Naive thymus-derived CD4-positive, alpha-beta T cell (primary cell): ENCODE measurements at regions of chr22 and their contacts with region 1.

Region 1: DNA sequence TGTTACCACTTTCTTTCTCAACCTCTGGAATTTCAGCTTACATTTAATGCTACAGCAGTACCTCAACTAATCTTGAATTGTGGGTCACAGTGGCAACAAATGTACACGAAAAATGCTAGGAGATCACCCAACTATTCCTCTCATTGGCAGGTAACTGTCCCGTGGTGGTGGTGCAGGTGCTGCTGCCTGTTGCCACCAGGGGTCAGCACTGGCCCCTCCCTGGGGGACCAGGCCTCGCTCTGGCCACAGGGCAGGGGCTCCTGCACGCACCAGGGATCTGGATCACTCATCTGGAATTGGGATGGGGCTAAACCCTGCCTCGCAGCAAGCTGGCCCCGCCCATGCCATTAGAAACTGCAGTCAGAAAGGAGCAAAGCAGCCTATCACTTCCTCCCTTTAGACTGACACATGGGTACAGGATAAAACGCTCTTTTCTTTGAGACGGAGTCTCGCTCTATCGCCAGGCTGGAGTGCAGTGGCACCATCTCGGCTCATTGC is 6.9 kb upstream of the POLDIP3 start:
- DNase-seq: peak; percentile 19 to 63 (median 41)
- ATAC-seq: peak; percentile 86
- H3K4me3 ChIP-seq: no peak overlapping the region
- H3K4me3 Mint-ChIP-seq: no peak overlapping the region
- H3K27ac ChIP-seq: no peak overlapping the region
- H3K27ac Mint-ChIP-seq: peak overlapping the region in 6 of 9 donors; percentile 18 to 70 (median 43)
- H3K4me1 ChIP-seq: no peaks in the 10 kb centered on the region
- H3K4me1 Mint-ChIP-seq: peaks cover 0 to 11% (median 6%) of the 10 kb centered on the region in 7 donors
- H3K27me3 ChIP-seq: no peaks in the 10 kb centered on the region
- H3K27me3 Mint-ChIP-seq: no peaks in the 10 kb centered on the region

Region 2: DNA sequence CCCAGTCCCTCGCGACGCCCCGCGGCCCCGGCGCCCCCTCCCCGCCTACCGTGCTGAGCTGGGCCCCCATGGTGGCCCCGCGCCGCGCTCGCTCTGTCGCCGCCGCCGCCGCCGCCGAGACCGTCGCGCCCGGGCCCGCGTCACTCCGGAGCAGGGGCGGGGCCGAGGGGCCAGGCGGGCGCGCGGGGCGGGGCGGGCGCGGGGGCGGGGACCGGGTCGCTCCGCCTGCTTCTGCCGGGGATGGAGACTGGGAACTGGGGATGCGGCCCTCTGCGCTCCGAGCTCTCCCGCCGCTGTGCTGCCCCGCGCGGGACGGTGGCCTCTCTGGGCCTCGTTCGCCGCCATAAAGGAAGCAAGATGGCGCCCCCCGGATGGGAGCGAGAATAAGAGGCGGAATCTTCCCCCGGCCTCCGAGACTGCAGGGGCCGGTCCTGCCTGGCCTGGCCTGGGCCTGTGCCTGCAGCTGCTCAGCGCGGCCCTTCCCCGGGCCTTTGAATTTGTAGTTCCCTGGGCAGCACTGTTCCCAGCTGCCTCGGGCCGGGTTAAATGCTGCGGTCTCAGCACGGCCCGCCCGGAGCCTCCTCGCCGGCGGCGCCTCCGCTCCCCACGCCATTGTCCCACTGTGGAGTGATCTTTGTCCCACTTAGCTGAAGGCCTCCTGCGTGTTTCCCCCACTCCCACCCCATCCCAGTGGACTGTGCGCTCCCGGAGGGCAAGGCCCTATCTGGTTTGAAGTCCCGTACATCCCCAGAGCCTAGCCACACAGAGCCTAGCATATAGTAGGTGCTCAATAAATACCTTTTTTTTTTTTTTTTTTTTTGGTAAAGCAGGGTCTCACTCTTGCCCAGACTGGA is 27.9 kb after region 1 on chr22 and contains the start of gene CYB5R3:
- CTCF ChIA-PET with region 1: interaction called, 5 read pairs
- POLR2A ChIA-PET with region 1: interaction called, 19 read pairs
- intact Hi-C with region 1: loop called in 1 of 2 experiments (anchors 1 kb)
- DNase-seq: peak; percentile 59 to 84 (median 76)
- ATAC-seq: peak; percentile 89
- H3K4me3 ChIP-seq: peak within 1 kb of the TSS; percentile 77
- H3K4me3 Mint-ChIP-seq: peak within 1 kb of the TSS; percentile 91 to 100 (median 98)
- H3K27ac ChIP-seq: peak within 1 kb of the TSS; percentile 84
- H3K27ac Mint-ChIP-seq: peak within 1 kb of the TSS; percentile 91 to 100 (median 98)
- H3K4me1 ChIP-seq: peaks cover 11 to 16% of the 10 kb centered on the region in 2 donors
- H3K4me1 Mint-ChIP-seq: peaks cover 7 to 38% (median 28%) of the 10 kb centered on the region in 7 donors
- H3K27me3 ChIP-seq: no peaks in the 10 kb centered on the region
- H3K27me3 Mint-ChIP-seq: peaks cover 0 to 2% (median 0%) of the 10 kb centered on the region in 5 donors
- total RNA-seq, gene CYB5R3: 34.3 to 70.6 (median 42.3) TPM

Region 3: DNA sequence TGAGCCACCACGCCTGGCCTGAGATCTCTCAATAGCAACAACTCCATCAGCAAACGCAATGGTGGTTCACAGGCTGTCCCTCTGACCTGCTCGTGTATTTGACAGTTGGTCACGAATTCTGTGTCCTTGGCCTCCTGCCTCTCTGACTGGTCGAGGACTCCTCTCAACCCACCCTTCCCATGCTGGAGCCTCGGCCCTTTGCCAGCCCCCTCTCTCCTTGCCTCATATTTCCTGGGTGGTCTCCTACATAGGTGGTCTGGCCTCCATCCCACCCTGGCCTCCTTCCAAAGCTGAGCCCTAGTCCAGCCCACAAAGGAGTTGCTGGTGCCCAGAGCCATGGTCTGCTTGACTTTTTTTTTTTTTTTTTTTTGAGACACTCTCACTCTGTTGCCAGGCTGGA is 110.5 kb after region 1 on chr22:
- CTCF ChIA-PET with region 1: no interaction called
- POLR2A ChIA-PET with region 1: no interaction called
- intact Hi-C with region 1: no loop called
- DNase-seq: no peak
- ATAC-seq: no peak
- H3K4me3 ChIP-seq: no peak overlapping the region
- H3K4me3 Mint-ChIP-seq: no peak overlapping the region
- H3K27ac ChIP-seq: no peak overlapping the region
- H3K27ac Mint-ChIP-seq: no peak overlapping the region
- H3K4me1 ChIP-seq: no peaks in the 10 kb centered on the region
- H3K4me1 Mint-ChIP-seq: no peaks in the 10 kb centered on the region
- H3K27me3 ChIP-seq: no peaks in the 10 kb centered on the region
- H3K27me3 Mint-ChIP-seq: peaks cover 5 to 23% (median 6%) of the 10 kb centered on the region in 5 donors